Caco-2 (cell line): ENCODE measurements at regions of chr22 and their contacts with region 1.

Region 1: DNA sequence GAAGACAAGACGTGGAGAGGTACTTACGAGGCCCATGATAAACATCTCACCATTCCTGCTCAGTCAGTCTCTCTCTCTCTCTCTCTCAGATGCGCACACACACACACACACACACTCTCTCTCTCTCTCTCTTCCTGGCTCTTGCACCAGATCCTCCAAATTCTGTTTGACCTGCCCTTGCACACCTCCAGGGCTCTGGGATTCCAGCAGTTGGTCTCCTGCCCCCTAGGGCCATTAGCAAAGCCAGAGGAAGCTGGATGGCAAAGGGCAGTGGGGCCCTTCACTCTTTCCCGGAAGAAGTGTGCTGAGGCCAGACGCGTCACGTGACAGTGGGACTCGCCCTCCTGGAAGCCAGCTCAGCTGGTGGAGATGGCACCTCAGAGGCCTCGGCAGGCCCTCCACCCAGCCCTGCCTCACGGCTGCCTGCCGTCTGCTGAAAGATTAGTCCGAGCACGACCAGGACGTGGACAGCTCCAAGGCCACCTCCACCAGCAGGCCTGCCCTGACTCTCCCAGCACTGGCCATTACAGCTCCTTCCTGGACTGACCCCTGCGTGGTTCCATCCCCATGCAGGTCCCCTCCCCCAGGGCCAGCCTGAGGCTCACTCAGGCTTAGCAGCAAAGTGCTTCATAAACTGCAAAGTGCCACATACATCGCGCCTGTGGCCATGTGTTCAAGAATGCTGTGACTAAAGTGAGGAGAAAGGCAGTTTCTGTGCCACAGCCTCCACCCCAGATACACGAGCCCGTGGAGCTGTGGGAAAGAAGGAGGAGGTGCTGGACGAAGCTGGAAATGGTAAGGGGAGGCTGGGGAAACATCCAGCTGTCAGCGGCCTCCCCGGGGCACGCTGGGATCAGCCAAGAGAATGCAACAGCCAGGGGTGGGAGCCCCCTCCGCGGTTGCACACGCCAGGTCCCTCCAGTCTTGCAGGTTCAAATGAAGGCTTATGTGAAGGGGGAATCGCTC is 3.7 kb downstream of the PDGFB start:
- DNase-seq: peak; percentile 94 to 96
- H3K4me3 ChIP-seq: peak overlapping the region; percentile 93
- H3K4me3 Mint-ChIP-seq: peak overlapping the region; percentile 88
- H3K27ac Mint-ChIP-seq: peak overlapping the region; percentile 84
- H3K4me1 ChIP-seq: peaks cover 20% of the 10 kb centered on the region
- H3K4me1 Mint-ChIP-seq: peaks cover 30% of the 10 kb centered on the region
- H3K27me3 ChIP-seq: no peaks in the 10 kb centered on the region
- H3K27me3 Mint-ChIP-seq: no peaks in the 10 kb centered on the region
- CTCF ChIP-seq: peak in 1 of 2 experiments; percentile 26

Region 2: DNA sequence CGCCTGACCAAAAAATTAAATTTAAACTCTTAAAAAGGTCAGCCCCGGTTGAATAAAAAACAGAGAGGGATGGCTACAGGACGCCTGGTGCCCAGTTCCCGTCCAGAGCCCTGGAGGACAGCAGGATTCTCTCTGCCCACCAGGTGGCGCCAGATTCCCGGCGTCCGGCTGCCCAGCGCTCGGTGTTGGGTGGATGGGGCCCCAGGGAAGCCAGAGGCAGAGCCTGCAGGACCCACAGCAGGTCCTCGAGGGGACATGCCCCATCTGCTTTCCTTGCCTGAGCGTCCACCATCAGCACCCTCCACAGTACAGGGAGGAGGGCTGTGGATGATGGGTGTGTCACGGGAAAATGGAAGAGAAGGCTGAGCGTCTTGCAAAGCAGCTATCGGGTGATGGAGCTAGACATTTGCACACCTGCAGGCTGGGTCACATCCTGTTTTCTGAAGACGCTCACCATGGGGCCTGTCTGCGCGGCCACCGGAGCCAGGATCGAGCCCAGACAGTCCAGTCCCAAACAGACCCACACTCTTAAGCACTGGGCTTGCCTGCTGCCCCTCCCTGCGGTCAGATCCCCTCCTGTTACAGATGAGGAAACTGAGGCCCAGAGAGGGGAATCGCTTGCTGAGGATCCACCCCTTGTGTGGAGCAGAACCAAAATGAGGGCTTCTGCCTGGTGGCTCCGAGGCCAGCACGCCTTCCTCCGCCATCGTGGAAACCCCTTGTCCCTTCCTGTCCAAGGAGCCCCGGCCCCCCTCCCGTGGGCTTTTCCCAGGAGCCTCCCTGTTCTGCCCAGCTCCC is 70.1 kb before region 1 on chr22:
- CTCF ChIA-PET with region 1: interaction called, 7 read pairs
- POLR2A ChIA-PET with region 1: interaction called, 7 read pairs
- intact Hi-C with region 1: loop called (anchors 1 kb)
- DNase-seq: peak; percentile 77 to 90
- H3K4me3 ChIP-seq: no peak overlapping the region
- H3K4me3 Mint-ChIP-seq: peak overlapping the region; percentile 32
- H3K27ac Mint-ChIP-seq: no peak overlapping the region
- H3K4me1 ChIP-seq: peaks cover 42% of the 10 kb centered on the region
- H3K4me1 Mint-ChIP-seq: peaks cover 43% of the 10 kb centered on the region
- H3K27me3 ChIP-seq: no peaks in the 10 kb centered on the region
- H3K27me3 Mint-ChIP-seq: peaks cover 3% of the 10 kb centered on the region
- CTCF ChIP-seq: peak; percentile 92 to 95

Region 3: DNA sequence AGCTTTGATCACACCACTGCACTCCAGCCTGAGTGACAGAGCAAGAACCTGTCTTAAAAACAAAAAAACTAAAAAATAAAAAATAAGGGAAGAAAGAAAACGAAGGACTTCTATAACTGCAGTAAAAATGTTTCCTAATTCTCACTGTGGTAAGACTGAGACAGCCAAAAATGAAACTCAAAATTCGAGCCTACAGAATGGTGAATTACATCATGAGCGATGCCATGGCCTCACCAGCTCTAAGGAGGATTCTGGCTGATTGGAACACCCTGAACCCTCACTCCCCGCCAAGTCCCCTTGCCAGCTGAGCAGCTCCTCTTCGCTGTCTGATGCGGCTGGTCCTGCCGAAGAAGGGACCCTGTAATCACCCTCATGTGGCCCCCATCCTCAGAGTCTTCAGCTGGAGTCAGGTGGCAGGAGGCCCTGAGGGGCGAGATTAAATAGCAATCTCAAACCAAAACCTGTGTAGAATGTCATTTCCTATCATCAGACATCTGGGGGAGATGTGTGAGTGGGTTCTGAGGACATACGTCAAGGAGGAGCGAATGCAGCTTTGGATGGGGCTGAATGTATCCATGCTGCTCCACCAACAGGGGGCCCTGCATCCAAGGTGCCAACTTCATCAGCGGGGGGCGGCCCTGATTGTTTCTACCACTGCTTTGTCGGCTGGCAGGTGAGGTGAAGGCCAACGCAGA is 25.5 kb before region 1 on chr22:
- CTCF ChIA-PET with region 1: interaction called, 9 read pairs
- POLR2A ChIA-PET with region 1: interaction called, 11 read pairs
- intact Hi-C with region 1: loop called (anchors 1 kb)
- DNase-seq: peak in 1 of 2 experiments; percentile 23
- H3K4me3 ChIP-seq: no peak overlapping the region
- H3K4me3 Mint-ChIP-seq: no peak overlapping the region
- H3K27ac Mint-ChIP-seq: peak overlapping the region; percentile 98
- H3K4me1 ChIP-seq: peaks cover 39% of the 10 kb centered on the region
- H3K4me1 Mint-ChIP-seq: peaks cover 20% of the 10 kb centered on the region
- H3K27me3 ChIP-seq: no peaks in the 10 kb centered on the region
- H3K27me3 Mint-ChIP-seq: no peaks in the 10 kb centered on the region
- CTCF ChIP-seq: peak; percentile 17 to 40

Region 4: GRCh38 chr22:39309881-39310714 is 69.0 kb after region 1 on chr22:
- CTCF ChIA-PET with region 1: interaction called, 13 read pairs
- POLR2A ChIA-PET with region 1: interaction called, 14 read pairs
- intact Hi-C with region 1: loop called (anchors 2 kb)
- DNase-seq: no peak
- H3K4me3 ChIP-seq: no peak overlapping the region
- H3K4me3 Mint-ChIP-seq: no peak overlapping the region
- H3K27ac Mint-ChIP-seq: no peak overlapping the region
- H3K4me1 ChIP-seq: peaks cover 8% of the 10 kb centered on the region; the same call in 1 of the 2 replicates
- H3K4me1 Mint-ChIP-seq: no peaks in the 10 kb centered on the region
- H3K27me3 ChIP-seq: no peaks in the 10 kb centered on the region
- H3K27me3 Mint-ChIP-seq: no peaks in the 10 kb centered on the region
- CTCF ChIP-seq: no peak

Region 5: GRCh38 chr22:39319270-39320022 is 78.3 kb after region 1 on chr22 and contains the start of gene RPL3:
- CTCF ChIA-PET with region 1: interaction called, 5 read pairs
- POLR2A ChIA-PET with region 1: interaction called, 15 read pairs
- intact Hi-C with region 1: no loop called
- DNase-seq: peak; percentile 93 to 97
- H3K4me3 ChIP-seq: peak within 1 kb of the TSS; percentile 67
- H3K4me3 Mint-ChIP-seq: peak within 1 kb of the TSS; percentile 96
- H3K27ac Mint-ChIP-seq: peak within 1 kb of the TSS; percentile 100
- H3K4me1 ChIP-seq: peaks cover 20% of the 10 kb centered on the region
- H3K4me1 Mint-ChIP-seq: peaks cover 8% of the 10 kb centered on the region
- H3K27me3 ChIP-seq: no peaks in the 10 kb centered on the region
- H3K27me3 Mint-ChIP-seq: peaks cover 4% of the 10 kb centered on the region
- CTCF ChIP-seq: no peak
- total RNA-seq, gene RPL3: 1,668 and 1,699 TPM in 2 replicates